ENCODE measurements at regions of chr17 and their contacts with region 1.

Region 1: DNA sequence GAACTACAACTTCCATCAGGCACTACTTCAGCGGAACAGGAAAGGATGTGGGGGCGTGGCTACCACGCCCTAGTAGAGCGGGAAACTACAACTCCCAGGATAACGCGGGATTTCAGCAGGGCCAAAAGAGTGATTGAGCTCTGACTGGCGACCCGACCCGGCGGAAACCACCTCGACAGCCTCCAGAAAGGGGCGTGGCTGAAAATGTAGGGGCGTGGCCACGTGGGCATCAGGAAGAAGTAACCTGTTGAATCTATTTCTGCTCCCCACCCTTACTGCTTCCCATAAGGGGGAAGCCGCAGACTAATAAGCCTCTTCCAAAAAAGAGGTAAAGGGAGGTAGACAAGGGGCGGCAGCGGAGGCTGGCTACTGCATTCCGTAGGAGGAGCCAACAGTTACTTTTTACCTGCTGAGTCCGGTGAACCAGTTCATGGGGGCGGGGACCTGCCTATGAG is at the start of gene TMEM102:
- DNase-seq: peak; percentile 96 to 99
- H3K4me3 ChIP-seq: peak within 1 kb of the TSS; percentile 50 to 83 (median 67)
- H3K27ac ChIP-seq: peak within 1 kb of the TSS; percentile 59
- H3K4me1 ChIP-seq: peaks cover 0 to 22% (median 8%) of the 10 kb centered on the region in 4 experiments; a peak in 6 of 7 replicates
- H3K27me3 ChIP-seq: peaks cover 2 to 19% (median 12%) of the 10 kb centered on the region in 4 experiments; a peak in 6 of 7 replicates
- CTCF ChIP-seq: no peak
- EP300 ChIP-seq: no peak
- POLR2A ChIP-seq: 0 out of 3 replicates have a peak, but pooled peaks of 1 of the 2 experiments have one; percentile 21
- RAD21 ChIP-seq: no peak
- total RNA-seq, gene TMEM102: 11.2 and 12.2 TPM in 2 replicates

Region 2: GRCh38 chr17:7361906-7362305 is 73.3 kb before region 1 on chr17:
- CTCF ChIA-PET with region 1: interaction called, 56 read pairs
- POLR2A ChIA-PET with region 1: interaction called, 8 read pairs
- DNase-seq: no peak
- H3K4me3 ChIP-seq: no peak overlapping the region
- H3K27ac ChIP-seq: no peak overlapping the region
- H3K4me1 ChIP-seq: peaks cover 0 to 1% (median under 1%) of the 10 kb centered on the region in 4 experiments; a peak in 3 of 7 replicates
- H3K27me3 ChIP-seq: no peaks in the 10 kb centered on the region
- CTCF ChIP-seq: no peak
- EP300 ChIP-seq: no peak
- POLR2A ChIP-seq: no peak
- RAD21 ChIP-seq: no peak

Region 3: GRCh38 chr17:7454980-7455379 is 19.7 kb after region 1 on chr17:
- CTCF ChIA-PET with region 1: interaction called, 10 read pairs
- POLR2A ChIA-PET with region 1: interaction called, 16 read pairs
- DNase-seq: no peak
- H3K4me3 ChIP-seq: peak overlapping the region in 2 of 4 experiments; percentile 78 to 87; a peak in 4 of 8 replicates
- H3K27ac ChIP-seq: no peak overlapping the region
- H3K4me1 ChIP-seq: peaks cover 0 to 8% (median 0%) of the 10 kb centered on the region in 4 experiments; a peak in 2 of 7 replicates
- H3K27me3 ChIP-seq: no peaks in the 10 kb centered on the region; a peak in 1 of 7 replicates
- CTCF ChIP-seq: no peak
- EP300 ChIP-seq: no peak
- POLR2A ChIP-seq: no peak
- RAD21 ChIP-seq: no peak

Region 4: GRCh38 chr17:7496470-7497183 is 61.4 kb after region 1 on chr17:
- CTCF ChIA-PET with region 1: interaction called, 7 read pairs
- POLR2A ChIA-PET with region 1: interaction called, 13 read pairs
- DNase-seq: no peak
- H3K4me3 ChIP-seq: no peak overlapping the region
- H3K27ac ChIP-seq: no peak overlapping the region
- H3K4me1 ChIP-seq: no peaks in the 10 kb centered on the region
- H3K27me3 ChIP-seq: no peaks in the 10 kb centered on the region
- CTCF ChIP-seq: no peak
- EP300 ChIP-seq: no peak
- POLR2A ChIP-seq: no peak
- RAD21 ChIP-seq: no peak

Region 5: GRCh38 chr17:7572588-7573323 is 137.5 kb after region 1 on chr17:
- CTCF ChIA-PET with region 1: no interaction called
- POLR2A ChIA-PET with region 1: interaction called, 13 read pairs
- DNase-seq: peak; percentile 100
- H3K4me3 ChIP-seq: peak overlapping the region; percentile 97 to 99 (median 98)
- H3K27ac ChIP-seq: peak overlapping the region; percentile 99
- H3K4me1 ChIP-seq: peaks cover 4 to 10% (median 7%) of the 10 kb centered on the region in 4 experiments
- H3K27me3 ChIP-seq: no peaks in the 10 kb centered on the region
- CTCF ChIP-seq: no peak
- EP300 ChIP-seq: no peak
- POLR2A ChIP-seq: peak; percentile 96 to 98
- RAD21 ChIP-seq: no peak

Measured in H1 (cell line).